Head of caudate nucleus (tissue), 42 donors: ENCODE measurements at regions of chr3 and their contacts with region 1.

Region 1: GRCh38 chr3:43621656-43622432 is at the start of gene ANO10:
- DNase-seq: peak; percentile 95 to 99 (median 98)

Region 2: GRCh38 chr3:42946050-42946449 is 675.8 kb before region 1 on chr3:
- intact Hi-C with region 1: no loop called
- DNase-seq: no peak

Region 3: GRCh38 chr3:43690400-43691119 is 68.7 kb after region 1 on chr3 and contains the start of gene ABHD5:
- intact Hi-C with region 1: loop called (anchors 2 kb)
- DNase-seq: peak; percentile 70 to 94 (median 90)

Region 4: DNA sequence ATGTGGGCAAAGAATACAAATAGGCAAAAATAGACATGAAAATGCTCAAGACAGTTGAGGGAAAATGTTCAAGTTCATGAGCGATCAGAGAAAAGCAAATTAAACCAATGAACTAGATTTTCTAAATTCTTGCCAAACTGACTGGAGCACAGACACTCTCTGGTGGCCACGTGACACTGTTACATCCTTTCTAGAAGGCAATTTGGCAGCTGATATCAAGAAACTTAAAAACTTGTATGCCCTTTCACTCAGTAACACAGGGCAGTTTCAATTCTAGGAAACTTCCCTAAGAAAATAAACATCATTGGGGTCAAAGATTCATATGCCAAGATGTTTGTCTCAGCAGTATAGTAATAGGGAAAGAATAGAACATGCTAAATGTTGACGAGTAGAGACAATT is 121.1 kb after region 1 on chr3:
- intact Hi-C with region 1: no loop called
- DNase-seq: peak in 2 of 42 donors; percentile 10

Region 5: GRCh38 chr3:44289882-44290462 is 668.1 kb after region 1 on chr3:
- intact Hi-C with region 1: no loop called
- DNase-seq: no peak